Activated CD4-positive, alpha-beta memory T cell treated with anti-CD3 and anti-CD28 coated beads, Interleukin-2, amount 10 ng/mL, durations not matched to agents 7 days and 5 days (primary cell): ENCODE measurements at regions of chr4 and their contacts with region 1.

Region 1: DNA sequence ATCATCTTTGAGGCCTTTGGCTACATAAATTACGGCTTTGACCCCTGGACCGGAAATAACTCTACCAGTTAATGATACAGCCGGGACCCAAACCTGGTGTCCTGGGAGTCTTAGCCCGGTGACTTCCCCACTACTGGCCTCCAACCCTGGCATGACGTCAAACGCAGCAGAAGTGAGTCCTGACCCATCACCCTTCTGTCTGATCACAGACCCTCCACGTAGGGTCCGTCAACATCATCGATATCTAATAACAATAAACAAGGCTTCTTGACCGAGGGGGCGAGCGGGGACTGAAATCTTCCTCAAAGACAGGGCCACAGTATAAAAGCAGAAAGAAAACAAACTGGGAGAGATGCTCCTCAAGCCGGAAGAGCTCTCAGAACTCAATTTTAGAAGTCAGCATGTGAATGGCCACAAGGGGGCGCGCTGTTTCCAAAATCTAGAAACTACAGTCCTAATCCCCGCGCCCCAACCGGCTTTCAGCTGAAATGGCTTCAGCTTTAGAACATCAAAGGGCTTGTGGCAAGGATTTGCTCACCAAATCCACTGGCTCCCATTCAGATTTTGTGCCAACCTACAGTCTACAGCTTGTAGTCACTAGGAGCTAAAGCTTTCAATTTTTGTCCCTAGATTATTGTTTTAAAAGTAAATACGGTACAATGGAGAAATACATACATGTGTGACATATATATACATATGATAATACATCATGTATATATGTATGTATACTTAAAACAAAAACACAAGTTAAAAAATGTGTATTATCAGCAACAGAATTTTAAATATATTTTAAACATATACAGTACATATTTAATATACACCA is 46.4 kb upstream of the ENPP6 start:
- DNase-seq: peak; percentile 96
- H3K4me3 Mint-ChIP-seq: no peak overlapping the region
- H3K27ac Mint-ChIP-seq: peak overlapping the region; percentile 26
- H3K4me1 Mint-ChIP-seq: peaks cover 50% of the 10 kb centered on the region
- H3K27me3 Mint-ChIP-seq: peaks cover 3% of the 10 kb centered on the region

Region 2: GRCh38 chr4:184250795-184251669 is 13.1 kb before region 1 on chr4:
- CTCF ChIA-PET with region 1: interaction called, 49 read pairs
- POLR2A ChIA-PET with region 1: interaction called, 12 read pairs
- DNase-seq: no peak
- H3K4me3 Mint-ChIP-seq: no peak overlapping the region
- H3K27ac Mint-ChIP-seq: peak overlapping the region; percentile 33
- H3K4me1 Mint-ChIP-seq: peaks cover 19% of the 10 kb centered on the region
- H3K27me3 Mint-ChIP-seq: peaks cover 7% of the 10 kb centered on the region

Region 3: DNA sequence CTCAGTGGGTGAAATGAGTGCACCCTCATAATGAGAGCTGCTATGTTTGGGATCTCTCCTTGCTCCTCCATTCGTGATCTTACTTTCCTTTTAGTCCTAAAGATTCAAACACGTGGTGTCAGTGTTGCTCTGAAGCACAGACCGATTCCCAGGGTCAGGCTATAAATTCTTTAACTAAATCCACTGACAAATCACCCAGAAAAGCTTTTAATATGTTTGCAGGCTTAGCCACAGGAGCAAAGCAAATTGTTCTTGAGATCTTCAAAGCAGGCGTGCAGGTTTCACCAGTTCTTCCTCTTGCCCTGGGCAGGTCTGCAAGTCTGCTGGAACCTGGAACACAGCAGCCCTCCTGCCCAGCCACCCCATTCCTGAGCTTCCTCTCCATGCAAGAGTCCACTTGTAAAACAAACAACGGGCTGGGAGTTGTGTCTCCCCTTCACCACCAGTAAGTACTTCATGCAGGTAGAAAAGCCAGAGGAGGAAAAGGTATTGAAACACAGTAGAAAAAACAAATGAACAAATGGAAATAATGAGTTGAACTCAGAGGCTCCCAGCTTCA is 23.7 kb after region 1 on chr4:
- CTCF ChIA-PET with region 1: interaction called, 102 read pairs
- POLR2A ChIA-PET with region 1: interaction called, 137 read pairs
- DNase-seq: no peak
- H3K4me3 Mint-ChIP-seq: no peak overlapping the region
- H3K27ac Mint-ChIP-seq: peak overlapping the region; percentile 76
- H3K4me1 Mint-ChIP-seq: peaks cover 45% of the 10 kb centered on the region
- H3K27me3 Mint-ChIP-seq: no peaks in the 10 kb centered on the region

Region 4: DNA sequence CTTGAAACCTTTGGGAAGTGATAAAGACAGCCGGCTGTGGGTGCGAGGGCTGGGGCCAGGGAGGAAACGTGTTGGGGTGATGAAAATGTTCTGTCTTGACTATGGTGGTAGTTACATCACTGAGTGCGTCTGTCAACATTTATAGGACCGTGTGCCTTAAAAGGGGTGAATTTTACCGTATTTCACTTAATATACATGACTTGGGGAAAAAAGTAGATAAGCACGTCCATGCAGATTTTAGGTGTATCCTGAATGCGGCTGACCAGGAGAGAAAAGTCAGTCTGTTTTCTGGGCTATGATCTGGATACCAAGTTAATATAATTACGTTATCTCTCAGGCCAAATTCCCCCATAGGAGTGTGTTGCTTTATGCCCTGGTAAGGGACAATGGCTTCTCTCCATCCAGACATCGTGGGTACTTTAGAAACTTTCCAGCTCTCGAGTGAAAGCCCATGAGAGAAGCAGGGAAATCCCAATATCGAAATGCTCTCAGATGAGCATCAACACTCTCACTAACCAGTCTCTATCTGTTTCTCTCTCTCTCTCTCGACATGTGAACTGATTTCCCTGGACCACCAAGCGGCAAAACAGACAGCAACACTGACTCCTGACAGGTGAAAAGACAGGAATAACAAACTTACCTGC is 138.7 kb after region 1 on chr4:
- CTCF ChIA-PET with region 1: no interaction called
- POLR2A ChIA-PET with region 1: no interaction called
- DNase-seq: no peak
- H3K4me3 Mint-ChIP-seq: no peak overlapping the region
- H3K27ac Mint-ChIP-seq: no peak overlapping the region
- H3K4me1 Mint-ChIP-seq: peaks cover 36% of the 10 kb centered on the region
- H3K27me3 Mint-ChIP-seq: no peaks in the 10 kb centered on the region

Region 5: GRCh38 chr4:184417802-184418511 is 153.8 kb after region 1 on chr4:
- CTCF ChIA-PET with region 1: interaction called, 17 read pairs
- POLR2A ChIA-PET with region 1: interaction called, 17 read pairs
- DNase-seq: peak; percentile 36
- H3K4me3 Mint-ChIP-seq: peak overlapping the region; percentile 77
- H3K27ac Mint-ChIP-seq: peak overlapping the region; percentile 98
- H3K4me1 Mint-ChIP-seq: peaks cover 92% of the 10 kb centered on the region
- H3K27me3 Mint-ChIP-seq: no peaks in the 10 kb centered on the region

Region 6: GRCh38 chr4:184498598-184498997 is 234.5 kb after region 1 on chr4:
- CTCF ChIA-PET with region 1: no interaction called
- POLR2A ChIA-PET with region 1: no interaction called
- DNase-seq: no peak
- H3K4me3 Mint-ChIP-seq: no peak overlapping the region
- H3K27ac Mint-ChIP-seq: no peak overlapping the region
- H3K4me1 Mint-ChIP-seq: peaks cover 7% of the 10 kb centered on the region
- H3K27me3 Mint-ChIP-seq: no peaks in the 10 kb centered on the region

Region 7: GRCh38 chr4:184514121-184514988 is 250.2 kb after region 1 on chr4:
- CTCF ChIA-PET with region 1: interaction called, 3 read pairs
- POLR2A ChIA-PET with region 1: interaction called, 11 read pairs
- DNase-seq: peak; percentile 71
- H3K4me3 Mint-ChIP-seq: peak overlapping the region; percentile 32
- H3K27ac Mint-ChIP-seq: peak overlapping the region; percentile 89
- H3K4me1 Mint-ChIP-seq: peaks cover 47% of the 10 kb centered on the region
- H3K27me3 Mint-ChIP-seq: no peaks in the 10 kb centered on the region

Region 8: DNA sequence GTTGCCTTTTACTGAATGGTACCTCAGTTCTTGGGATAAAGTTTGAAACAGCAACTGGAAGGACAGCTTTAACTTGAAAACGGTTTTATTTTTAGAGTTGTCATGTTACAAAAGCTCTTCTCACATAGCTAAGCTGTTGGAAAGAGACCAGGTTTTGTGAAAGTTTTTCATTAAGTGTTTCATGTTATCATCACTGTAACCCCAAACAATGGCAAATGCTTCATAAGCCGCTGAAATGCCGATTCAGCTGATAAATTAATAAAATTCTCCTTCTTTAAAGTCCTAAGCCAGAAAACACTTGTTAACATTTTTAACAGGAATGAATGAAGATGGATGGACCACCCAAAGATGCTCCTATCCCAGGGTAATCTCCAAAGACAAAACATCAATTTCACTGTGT is 286.4 kb after region 1 on chr4:
- CTCF ChIA-PET with region 1: interaction called, 10 read pairs
- POLR2A ChIA-PET with region 1: no interaction called
- DNase-seq: no peak
- H3K4me3 Mint-ChIP-seq: no peak overlapping the region
- H3K27ac Mint-ChIP-seq: no peak overlapping the region
- H3K4me1 Mint-ChIP-seq: peaks cover 13% of the 10 kb centered on the region
- H3K27me3 Mint-ChIP-seq: peaks cover 2% of the 10 kb centered on the region

Region 9: GRCh38 chr4:184733654-184734524 is 469.8 kb after region 1 on chr4 and contains the start of gene CENPU:
- CTCF ChIA-PET with region 1: interaction called, 31 read pairs
- POLR2A ChIA-PET with region 1: interaction called, 41 read pairs
- DNase-seq: peak; percentile 96
- H3K4me3 Mint-ChIP-seq: peak within 1 kb of the TSS; percentile 100
- H3K27ac Mint-ChIP-seq: peak within 1 kb of the TSS; percentile 95
- H3K4me1 Mint-ChIP-seq: peaks cover 38% of the 10 kb centered on the region
- H3K27me3 Mint-ChIP-seq: no peaks in the 10 kb centered on the region
- total RNA-seq, gene CENPU: 69.6 to 69.7 TPM